A673 (cell line): ENCODE measurements at regions of chr15 and their contacts with region 1.

Region 1: DNA sequence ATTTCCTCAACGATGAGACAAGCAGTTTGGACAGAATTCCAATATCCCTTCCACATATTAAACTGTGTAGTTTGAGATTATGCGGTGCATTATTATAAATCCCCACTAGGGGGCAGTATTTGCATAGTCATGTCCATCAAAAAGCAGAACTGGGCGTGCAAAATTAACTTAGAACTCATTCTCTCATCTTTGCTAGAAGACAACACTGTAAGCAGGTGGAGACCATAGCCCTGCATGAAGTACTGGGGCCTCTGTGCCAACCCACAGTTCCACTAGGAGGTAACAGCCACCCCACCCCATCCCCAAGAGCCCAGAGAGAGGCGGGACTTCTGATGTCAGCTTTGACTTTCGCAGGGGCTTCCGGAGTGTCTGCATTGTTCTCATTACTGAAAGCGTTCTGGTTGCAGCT is 106.6 kb upstream of the TMC3 start:
- DNase-seq: peak; percentile 66
- H3K4me3 ChIP-seq: no peak overlapping the region
- H3K27ac ChIP-seq: no peak overlapping the region
- H3K4me1 ChIP-seq: no peaks in the 10 kb centered on the region
- H3K27me3 ChIP-seq: no peaks in the 10 kb centered on the region
- CTCF ChIP-seq: peak; percentile 76

Region 2: GRCh38 chr15:81809543-81809942 is 328.9 kb after region 1 on chr15:
- CTCF ChIA-PET with region 1: no interaction called
- POLR2A ChIA-PET with region 1: no interaction called
- intact Hi-C with region 1: loop called (anchors 5 kb)
- DNase-seq: peak; percentile 73
- H3K4me3 ChIP-seq: no peak overlapping the region
- H3K27ac ChIP-seq: no peak overlapping the region
- H3K4me1 ChIP-seq: no peaks in the 10 kb centered on the region
- H3K27me3 ChIP-seq: no peaks in the 10 kb centered on the region
- CTCF ChIP-seq: peak; percentile 60

Region 3: GRCh38 chr15:81939604-81940440 is 459.2 kb after region 1 on chr15:
- CTCF ChIA-PET with region 1: no interaction called
- POLR2A ChIA-PET with region 1: no interaction called
- intact Hi-C with region 1: loop called (anchors 10 kb)
- DNase-seq: peak; percentile 52
- H3K4me3 ChIP-seq: no peak overlapping the region
- H3K27ac ChIP-seq: no peak overlapping the region
- H3K4me1 ChIP-seq: no peaks in the 10 kb centered on the region
- H3K27me3 ChIP-seq: no peaks in the 10 kb centered on the region
- CTCF ChIP-seq: peak; percentile 69

Region 4: DNA sequence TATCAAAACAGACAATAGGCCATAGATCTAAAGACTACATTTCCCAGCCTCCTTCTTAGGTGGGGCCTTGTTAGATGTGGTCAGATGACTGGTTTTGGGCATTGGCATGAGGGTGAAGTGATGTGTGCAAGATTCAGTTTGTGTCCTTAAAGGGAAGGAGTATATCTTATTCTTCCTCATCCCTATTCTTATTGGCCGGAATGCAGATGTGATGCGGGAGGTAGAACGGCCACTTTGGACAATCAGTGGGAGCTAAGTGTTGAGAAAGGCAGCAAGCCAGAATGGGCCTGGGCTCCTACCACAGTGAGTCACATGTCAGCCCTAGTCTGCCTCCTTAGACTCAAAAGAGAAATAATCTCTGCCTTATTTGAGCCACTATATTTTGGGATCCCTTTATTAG is 655.0 kb after region 1 on chr15:
- CTCF ChIA-PET with region 1: no interaction called
- POLR2A ChIA-PET with region 1: no interaction called
- intact Hi-C with region 1: loop called (anchors 2 kb)
- DNase-seq: no peak
- H3K4me3 ChIP-seq: no peak overlapping the region
- H3K27ac ChIP-seq: no peak overlapping the region
- H3K4me1 ChIP-seq: no peaks in the 10 kb centered on the region
- H3K27me3 ChIP-seq: no peaks in the 10 kb centered on the region
- CTCF ChIP-seq: no peak

Region 5: DNA sequence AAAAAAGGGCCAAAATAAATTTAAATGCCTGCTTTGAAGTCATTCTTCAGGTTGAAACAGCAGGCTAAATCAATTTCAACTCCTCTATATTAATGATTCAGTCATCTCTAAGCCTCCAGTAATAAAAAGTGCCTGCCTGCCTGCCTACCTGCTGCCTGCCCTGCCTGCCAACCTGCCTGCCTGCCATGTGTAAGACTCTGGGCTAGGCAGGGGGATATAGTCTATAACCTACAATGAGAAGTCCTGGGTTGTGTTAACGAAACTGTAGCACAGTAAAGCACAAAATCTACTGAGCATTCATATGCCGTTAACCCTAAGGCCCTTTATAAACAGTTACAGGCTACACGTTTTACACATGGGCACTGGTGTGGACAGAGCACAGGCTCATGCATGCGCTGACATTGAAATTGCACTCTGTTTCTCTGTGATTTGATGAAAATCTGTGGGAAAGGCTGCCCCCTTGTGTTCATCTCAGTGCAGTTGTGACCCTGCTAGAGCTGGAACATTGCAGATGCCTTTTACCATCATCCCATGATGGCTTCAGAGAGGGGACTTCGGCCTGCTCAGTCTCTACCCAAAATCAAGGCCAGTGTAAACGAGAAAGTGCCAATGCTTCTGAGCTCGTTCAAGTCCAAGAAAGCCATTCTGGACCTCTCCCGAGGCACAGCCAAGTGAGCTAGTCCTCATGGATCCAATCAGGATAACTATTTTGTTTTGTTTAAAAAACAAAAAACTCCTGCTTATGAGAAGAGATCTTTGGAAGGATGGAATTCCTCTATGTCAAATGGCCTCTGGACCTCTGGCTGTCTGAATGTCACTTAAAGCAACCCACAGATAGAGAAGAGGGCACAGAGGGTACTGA is 717.3 kb after region 1 on chr15:
- CTCF ChIA-PET with region 1: no interaction called
- POLR2A ChIA-PET with region 1: no interaction called
- intact Hi-C with region 1: loop called (anchors 5 kb)
- DNase-seq: peak; percentile 76
- H3K4me3 ChIP-seq: no peak overlapping the region
- H3K27ac ChIP-seq: no peak overlapping the region
- H3K4me1 ChIP-seq: no peaks in the 10 kb centered on the region
- H3K27me3 ChIP-seq: no peaks in the 10 kb centered on the region
- CTCF ChIP-seq: peak; percentile 78